ENCODE measurements at regions of chr18 and their contacts with region 1.

Region 1: DNA sequence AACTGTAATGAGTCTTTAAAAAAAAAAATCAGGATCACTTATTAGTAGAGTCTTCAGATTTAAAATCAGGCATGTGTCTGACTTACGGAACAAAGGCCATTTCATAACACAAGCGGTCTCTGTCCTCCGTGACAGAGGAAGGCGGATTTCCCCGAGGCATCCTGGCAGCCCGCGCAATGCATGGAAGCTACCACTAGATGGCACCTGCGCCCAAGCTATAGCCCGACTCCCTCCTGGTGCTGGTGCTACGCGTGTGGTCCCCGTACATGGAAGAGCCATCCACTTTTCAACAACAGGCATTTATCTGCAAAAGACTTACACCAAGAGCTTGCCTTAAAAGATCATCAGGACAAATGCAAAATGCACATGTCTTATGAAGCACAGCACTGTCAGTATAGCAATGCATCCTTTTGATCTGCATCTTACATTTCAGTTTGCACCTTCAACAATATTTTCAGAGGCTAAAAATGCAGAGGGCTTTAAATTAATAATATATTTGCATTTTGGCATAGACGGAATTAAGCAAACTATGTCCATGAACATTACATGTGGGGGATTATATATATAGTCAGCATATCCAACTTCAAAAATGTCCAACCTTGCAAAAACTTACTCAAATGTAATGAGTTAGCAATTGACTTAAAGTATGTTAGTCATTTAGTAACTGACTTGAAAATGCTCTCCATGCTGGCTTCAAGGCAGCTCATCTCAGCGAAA is 96.0 kb downstream of the ZNF516 start:
- H3K4me3 ChIP-seq: no peak overlapping the region
- H3K27ac ChIP-seq: no peak overlapping the region
- H3K4me1 ChIP-seq: peaks cover 4% of the 10 kb centered on the region; the same call in 1 of the 2 replicates
- CTCF ChIP-seq: peak; percentile 81

Region 2: DNA sequence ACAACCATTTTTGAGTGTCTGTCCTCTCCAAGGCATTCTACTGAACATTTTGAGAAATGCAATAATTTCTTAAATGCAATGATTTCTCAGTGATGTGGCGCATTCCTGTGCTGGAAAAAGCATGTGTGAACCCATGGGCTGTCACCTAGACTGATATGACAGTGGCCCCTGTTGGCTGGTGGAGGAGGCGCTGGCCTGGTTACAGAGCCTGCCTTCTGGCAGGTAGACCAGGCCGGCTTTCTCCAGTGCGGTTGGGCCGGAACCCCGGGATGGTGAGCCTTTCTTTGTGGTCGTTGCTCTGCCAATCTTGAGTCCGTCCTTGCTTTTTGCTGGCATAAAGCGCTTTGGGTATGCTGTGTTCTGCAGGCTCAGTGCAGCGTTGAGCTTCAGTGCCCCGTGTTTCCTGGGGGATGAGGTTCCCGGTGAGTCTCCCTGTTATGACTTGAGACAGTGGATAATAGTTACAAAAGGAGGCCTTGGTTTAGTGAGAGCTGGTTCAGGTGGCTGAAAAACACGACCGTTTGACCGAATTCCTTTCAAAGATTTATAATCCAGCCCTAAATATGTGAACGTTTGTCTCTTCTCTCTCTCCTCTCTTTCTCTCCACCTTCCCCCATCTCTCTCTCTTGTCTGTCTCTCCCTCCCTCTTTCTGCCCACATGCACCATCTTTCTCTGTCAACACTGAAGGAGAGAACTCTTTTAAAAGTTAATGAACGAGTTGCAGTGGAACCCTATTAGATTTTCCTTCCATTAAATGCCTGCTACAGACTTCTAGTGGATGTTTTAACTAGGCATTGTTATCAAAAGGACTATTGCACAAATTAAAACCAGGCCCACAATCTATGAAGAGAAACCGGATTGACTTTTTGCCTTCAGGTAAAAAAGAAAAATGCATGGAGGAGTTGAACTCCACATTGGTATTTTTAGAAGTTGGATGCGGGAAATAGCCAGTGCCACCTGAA is 1154.4 kb before region 1 on chr18:
- CTCF ChIA-PET with region 1: no interaction called
- POLR2A ChIA-PET with region 1: no interaction called
- H3K4me3 ChIP-seq: no peak overlapping the region
- H3K27ac ChIP-seq: no peak overlapping the region
- H3K4me1 ChIP-seq: peaks cover 20% of the 10 kb centered on the region
- CTCF ChIP-seq: peak; percentile 40; the same call in 1 of the 2 replicates

Region 3: DNA sequence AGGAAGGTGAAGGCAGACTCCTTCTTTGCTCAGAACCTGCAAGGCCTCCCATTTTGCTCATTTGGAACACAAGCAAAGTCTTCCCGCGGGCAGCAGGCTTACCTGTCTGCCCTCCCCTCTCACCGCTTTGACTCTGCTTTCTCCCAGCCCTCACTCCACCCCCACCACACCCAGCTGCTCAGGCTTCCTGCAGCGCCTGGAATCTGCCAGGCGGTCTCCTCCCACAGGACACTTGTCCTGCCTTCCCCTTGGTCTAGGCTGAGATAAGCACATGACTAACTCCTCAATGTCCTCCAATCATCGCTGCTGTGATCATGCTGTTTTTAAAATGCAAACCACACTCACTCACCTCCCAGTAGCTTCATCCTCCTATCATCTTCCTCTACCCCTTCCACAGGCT is 334.1 kb before region 1 on chr18:
- CTCF ChIA-PET with region 1: no interaction called
- POLR2A ChIA-PET with region 1: no interaction called
- H3K4me3 ChIP-seq: no peak overlapping the region
- H3K27ac ChIP-seq: no peak overlapping the region
- H3K4me1 ChIP-seq: no peaks in the 10 kb centered on the region
- CTCF ChIP-seq: no peak

Region 4: GRCh38 chr18:76131738-76132137 is 267.3 kb before region 1 on chr18:
- CTCF ChIA-PET with region 1: no interaction called
- POLR2A ChIA-PET with region 1: no interaction called
- H3K4me3 ChIP-seq: no peak overlapping the region
- H3K27ac ChIP-seq: no peak overlapping the region
- H3K4me1 ChIP-seq: no peaks in the 10 kb centered on the region
- CTCF ChIP-seq: no peak

Region 5: GRCh38 chr18:76384861-76385680 is 14.0 kb before region 1 on chr18:
- CTCF ChIA-PET with region 1: interaction called, 28 read pairs
- POLR2A ChIA-PET with region 1: no interaction called
- H3K4me3 ChIP-seq: no peak overlapping the region
- H3K27ac ChIP-seq: no peak overlapping the region
- H3K4me1 ChIP-seq: no peaks in the 10 kb centered on the region
- CTCF ChIP-seq: no peak

Region 6: GRCh38 chr18:76426737-76427305 is 27.8 kb after region 1 on chr18:
- CTCF ChIA-PET with region 1: interaction called, 14 read pairs
- POLR2A ChIA-PET with region 1: no interaction called
- H3K4me3 ChIP-seq: no peak overlapping the region
- H3K27ac ChIP-seq: no peak overlapping the region
- H3K4me1 ChIP-seq: 0 out of 2 replicates have a peak, but pooled peaks cover 3% of the 10 kb centered on the region
- CTCF ChIP-seq: peak; percentile 44

Region 7: GRCh38 chr18:76499637-76500340 is 100.7 kb after region 1 on chr18:
- CTCF ChIA-PET with region 1: interaction called, 10 read pairs
- POLR2A ChIA-PET with region 1: no interaction called
- H3K4me3 ChIP-seq: no peak overlapping the region
- H3K27ac ChIP-seq: no peak overlapping the region
- H3K4me1 ChIP-seq: 0 out of 2 replicates have a peak, but pooled peaks cover 2% of the 10 kb centered on the region
- CTCF ChIP-seq: no peak

Region 8: GRCh38 chr18:76565238-76566180 is 166.5 kb after region 1 on chr18:
- CTCF ChIA-PET with region 1: no interaction called
- POLR2A ChIA-PET with region 1: no interaction called
- H3K4me3 ChIP-seq: no peak overlapping the region
- H3K27ac ChIP-seq: no peak overlapping the region
- H3K4me1 ChIP-seq: peaks cover 13% of the 10 kb centered on the region
- CTCF ChIP-seq: no peak

Region 9: GRCh38 chr18:76686737-76687262 is 287.7 kb after region 1 on chr18:
- CTCF ChIA-PET with region 1: interaction called, 99 read pairs
- POLR2A ChIA-PET with region 1: no interaction called
- H3K4me3 ChIP-seq: no peak overlapping the region
- H3K27ac ChIP-seq: 0 out of 2 replicates have a peak overlapping the region, but pooled peaks have one; percentile 24
- H3K4me1 ChIP-seq: peaks cover 3% of the 10 kb centered on the region; the same call in 1 of the 2 replicates
- CTCF ChIP-seq: peak; percentile 50; the same call in 1 of the 2 replicates

Region 10: GRCh38 chr18:76709659-76710645 is 310.9 kb after region 1 on chr18:
- CTCF ChIA-PET with region 1: interaction called, 96 read pairs
- POLR2A ChIA-PET with region 1: no interaction called
- H3K4me3 ChIP-seq: no peak overlapping the region
- H3K27ac ChIP-seq: no peak overlapping the region
- H3K4me1 ChIP-seq: no peaks in the 10 kb centered on the region
- CTCF ChIP-seq: peak; percentile 72